Activated B cell treated with CpG ODN at 0.5 μM for 24 hours (primary cell): ENCODE measurements at regions of chr5 and their contacts with region 1.

Region 1: GRCh38 chr5:176629853-176630712 is at the starts of genes EIF4E1B and SNCB:
- DNase-seq: peak; percentile 69
- ATAC-seq: peak; percentile 97
- H3K4me3 Mint-ChIP-seq: peak within 1 kb of the TSS; percentile 77
- H3K27ac Mint-ChIP-seq: no peak within 1 kb of the TSS
- H3K4me1 Mint-ChIP-seq: peaks cover 51% of the 10 kb centered on the region
- H3K27me3 Mint-ChIP-seq: peaks cover 28% of the 10 kb centered on the region
- CTCF ChIP-seq: no peak
- total RNA-seq, gene EIF4E1B: not detected in 2 replicates
- total RNA-seq, gene SNCB: 0.17 TPM in 1 of 2 replicates, not detected in the other

Region 2: GRCh38 chr5:176609724-176610434 is 20.2 kb before region 1 on chr5 and contains the start of gene GPRIN1:
- CTCF ChIA-PET with region 1: no interaction called
- POLR2A ChIA-PET with region 1: no interaction called
- intact Hi-C with region 1: loop called (anchors 1 kb)
- DNase-seq: peak; percentile 82
- ATAC-seq: peak; percentile 74
- H3K4me3 Mint-ChIP-seq: peak within 1 kb of the TSS; percentile 87
- H3K27ac Mint-ChIP-seq: peak within 1 kb of the TSS; percentile 65
- H3K4me1 Mint-ChIP-seq: peaks cover 10% of the 10 kb centered on the region
- H3K27me3 Mint-ChIP-seq: peaks cover 18% of the 10 kb centered on the region
- CTCF ChIP-seq: no peak
- total RNA-seq, gene GPRIN1: 2.8 and 3.2 TPM in 2 replicates

Region 3: GRCh38 chr5:176619203-176619568 is 10.9 kb before region 1 on chr5:
- CTCF ChIA-PET with region 1: interaction called, 4 read pairs
- POLR2A ChIA-PET with region 1: no interaction called
- intact Hi-C with region 1: loop called (anchors 1 kb)
- DNase-seq: peak; percentile 50
- ATAC-seq: peak; percentile 96
- H3K4me3 Mint-ChIP-seq: peak overlapping the region; percentile 24
- H3K27ac Mint-ChIP-seq: no peak overlapping the region
- H3K4me1 Mint-ChIP-seq: peaks cover 9% of the 10 kb centered on the region
- H3K27me3 Mint-ChIP-seq: peaks cover 57% of the 10 kb centered on the region
- CTCF ChIP-seq: no peak

Region 4: GRCh38 chr5:176647030-176647866 is 17.2 kb after region 1 on chr5 and contains the start of gene TSPAN17:
- CTCF ChIA-PET with region 1: interaction called, 15 read pairs
- POLR2A ChIA-PET with region 1: interaction called, 29 read pairs
- intact Hi-C with region 1: loop called (anchors 1 kb)
- DNase-seq: peak; percentile 99
- ATAC-seq: peak; percentile 97
- H3K4me3 Mint-ChIP-seq: peak within 1 kb of the TSS; percentile 90
- H3K27ac Mint-ChIP-seq: peak within 1 kb of the TSS; percentile 91
- H3K4me1 Mint-ChIP-seq: peaks cover 45% of the 10 kb centered on the region
- H3K27me3 Mint-ChIP-seq: no peaks in the 10 kb centered on the region
- CTCF ChIP-seq: no peak
- total RNA-seq, gene TSPAN17: 20.7 and 27.7 TPM in 2 replicates